ENCODE measurements at regions of chr9 and their contacts with region 1.

Region 1: GRCh38 chr9:35696525-35697215 is 6.9 kb upstream of the TPM2 start:
- DNase-seq: peak; percentile 80

Region 2: DNA sequence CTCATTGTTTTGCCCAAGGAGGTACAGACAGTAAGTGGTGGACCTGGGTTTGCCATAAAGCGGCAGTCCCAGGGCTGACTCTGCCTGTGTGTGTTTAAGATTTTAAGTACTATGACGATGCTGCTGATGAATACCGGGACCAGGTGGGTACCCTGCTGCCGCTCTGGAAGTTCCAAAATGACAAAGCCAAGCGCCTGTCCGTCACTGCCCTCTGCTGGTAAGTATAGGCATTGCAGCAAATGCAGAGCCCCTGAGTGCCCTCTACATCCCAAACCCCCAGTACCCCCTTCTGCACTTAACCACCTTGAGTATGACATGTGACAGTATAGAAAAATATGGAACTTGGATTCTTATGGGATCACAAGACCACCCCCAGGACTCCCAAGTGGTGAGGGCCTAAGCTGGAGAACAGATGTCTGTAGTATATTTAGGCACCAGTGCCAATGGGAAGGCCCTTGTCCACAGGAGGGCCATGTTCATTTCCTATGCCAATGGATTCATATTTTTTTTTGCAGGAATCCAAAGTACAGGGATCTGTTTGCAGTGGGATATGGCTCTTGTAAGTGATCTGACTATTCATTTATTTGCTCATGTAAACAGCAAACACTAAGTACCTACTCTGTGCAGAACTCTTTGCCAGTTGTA is 1195.9 kb before region 1 on chr9:
- intact Hi-C with region 1: no loop called
- DNase-seq: no peak

Region 3: GRCh38 chr9:35406183-35406956 is 290.3 kb before region 1 on chr9:
- intact Hi-C with region 1: no loop called
- DNase-seq: no peak

Region 4: GRCh38 chr9:35729700-35730485 is 33.2 kb after region 1 on chr9:
- intact Hi-C with region 1: loop called in 1 of 2 experiments (anchors 2 kb)
- DNase-seq: peak; percentile 89

Region 5: DNA sequence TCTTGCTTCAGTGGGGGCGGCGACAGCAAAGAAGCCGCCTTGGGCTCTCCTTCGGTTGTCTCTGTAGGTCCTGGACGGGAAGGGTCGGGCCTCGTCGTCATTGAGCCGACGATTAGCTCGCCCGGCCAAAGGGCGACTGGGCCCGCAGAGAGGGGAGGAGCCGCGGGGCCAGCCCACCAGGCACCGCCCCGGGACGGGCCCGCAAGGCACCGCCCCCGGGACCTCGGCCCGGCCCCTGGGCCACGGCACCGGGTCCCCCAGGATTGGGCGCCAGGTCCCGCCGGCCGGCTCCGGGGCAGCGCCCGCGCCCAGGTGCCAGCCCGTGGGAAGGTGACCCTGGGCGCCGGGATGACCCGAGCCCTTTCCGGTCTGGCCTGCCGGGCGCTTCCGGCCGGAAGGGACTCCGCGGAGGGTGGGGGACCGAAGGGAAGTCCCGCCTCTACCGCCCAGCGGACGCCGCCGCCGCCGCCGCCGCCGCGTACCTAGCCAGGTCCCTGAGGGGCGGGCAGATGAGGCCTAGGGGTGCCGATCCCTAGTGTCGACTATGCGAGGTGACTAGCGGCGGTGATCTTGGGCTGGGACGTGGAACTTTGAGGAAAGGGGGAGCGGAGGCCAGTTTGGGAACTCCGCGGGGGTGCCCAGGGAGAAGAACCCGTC is 52.3 kb after region 1 on chr9 and contains the starts of genes GBA2 and RGP1:
- intact Hi-C with region 1: loop called in 1 of 2 experiments (anchors 5 kb)
- DNase-seq: peak; percentile 94
- total RNA-seq, gene GBA2: 50.1 to 57.7 TPM
- total RNA-seq, gene RGP1: 27.8 to 29.5 TPM